IMR-90 (cell line): ENCODE measurements at regions of chr5 and their contacts with region 1.

Region 1: GRCh38 chr5:53249529-53250200 is 140.1 kb upstream of the MOCS2 start:
- DNase-seq: peak; percentile 98
- ATAC-seq: peak; percentile 76
- H3K4me3 ChIP-seq: no peak overlapping the region
- H3K27ac ChIP-seq: peak overlapping the region; percentile 92
- H3K4me1 ChIP-seq: peaks cover 16% of the 10 kb centered on the region
- H3K27me3 ChIP-seq: no peaks in the 10 kb centered on the region
- CTCF ChIP-seq: no peak
- POLR2A ChIP-seq: no peak
- RAD21 ChIP-seq: no peak

Region 2: DNA sequence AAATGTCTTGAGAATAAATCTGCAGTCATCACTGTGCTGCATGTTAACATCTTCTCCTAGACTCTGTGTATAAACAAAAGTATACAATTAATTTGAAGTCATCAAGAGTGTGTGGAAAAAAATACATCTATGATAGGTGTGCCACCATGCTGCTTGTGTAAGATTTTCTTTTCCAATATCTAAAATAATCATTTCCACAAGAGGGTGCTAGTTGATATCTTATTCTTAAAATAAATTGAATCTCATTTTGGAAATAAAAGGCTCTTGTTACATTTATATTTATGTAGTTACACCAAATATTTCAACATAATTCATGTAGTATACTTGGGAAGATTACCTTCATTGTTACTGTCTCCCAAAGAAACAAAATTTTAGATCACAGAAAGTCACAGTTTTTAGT is 126.0 kb before region 1 on chr5:
- CTCF ChIA-PET with region 1: no interaction called
- POLR2A ChIA-PET with region 1: no interaction called
- dilution Hi-C with region 1: no loop called
- in situ Hi-C with region 1: no loop called
- intact Hi-C with region 1: loop called (anchors 5 kb)
- DNase-seq: peak; percentile 40
- ATAC-seq: peak; percentile 36; the same call in 1 of the 2 replicates
- H3K4me3 ChIP-seq: no peak overlapping the region
- H3K27ac ChIP-seq: no peak overlapping the region
- H3K4me1 ChIP-seq: peaks cover 5% of the 10 kb centered on the region; the same call in 1 of the 2 replicates
- H3K27me3 ChIP-seq: no peaks in the 10 kb centered on the region; the same call in 1 of the 2 replicates
- CTCF ChIP-seq: peak; percentile 41
- POLR2A ChIP-seq: no peak
- RAD21 ChIP-seq: peak; percentile 46

Region 3: GRCh38 chr5:53406630-53407316 is 157.1 kb after region 1 on chr5:
- CTCF ChIA-PET with region 1: no interaction called
- POLR2A ChIA-PET with region 1: interaction called, 15 read pairs
- dilution Hi-C with region 1: no loop called
- in situ Hi-C with region 1: no loop called
- intact Hi-C with region 1: no loop called
- DNase-seq: peak; percentile 97
- ATAC-seq: peak; percentile 45
- H3K4me3 ChIP-seq: no peak overlapping the region
- H3K27ac ChIP-seq: peak overlapping the region; percentile 98
- H3K4me1 ChIP-seq: peaks cover 20% of the 10 kb centered on the region
- H3K27me3 ChIP-seq: no peaks in the 10 kb centered on the region
- CTCF ChIP-seq: no peak
- POLR2A ChIP-seq: no peak
- RAD21 ChIP-seq: no peak